Transverse colon (tissue), 4 donors: ENCODE measurements at regions of chr5 and their contacts with region 1.

Region 1: GRCh38 chr5:175579742-175580432 is 78.0 kb upstream of the HRH2 start:
- DNase-seq: no peak
- H3K4me3 ChIP-seq: no peak overlapping the region
- H3K27ac ChIP-seq: no peak overlapping the region
- H3K4me1 ChIP-seq: no peaks in the 10 kb centered on the region
- H3K27me3 ChIP-seq: peaks cover 18% of the 10 kb centered on the region
- CTCF ChIP-seq: no peak
- EP300 ChIP-seq: no peak
- POLR2A ChIP-seq: no peak

Region 2: DNA sequence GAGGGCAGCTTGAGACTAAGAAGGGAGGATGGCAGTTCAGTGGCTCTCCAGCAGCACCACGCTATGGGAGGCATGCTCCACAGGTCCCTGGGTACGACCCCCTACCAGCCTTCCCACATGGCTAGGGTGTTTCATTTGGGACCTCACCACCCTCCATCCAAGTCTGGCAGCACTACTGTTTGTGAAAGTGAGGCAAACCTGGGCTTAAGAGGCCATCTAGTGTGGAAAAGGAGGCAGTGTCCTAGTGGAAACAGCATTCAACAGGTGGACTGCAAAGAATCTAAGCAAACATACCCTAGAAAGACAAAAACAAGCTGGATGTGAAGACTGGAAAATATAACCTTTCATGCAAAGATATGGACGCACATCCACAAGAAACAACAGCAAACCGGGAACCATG is 1595.7 kb before region 1 on chr5:
- in situ Hi-C with region 1: no loop called
- intact Hi-C with region 1: loop called (anchors 5 kb)
- DNase-seq: no peak
- H3K4me3 ChIP-seq: no peak overlapping the region
- H3K27ac ChIP-seq: no peak overlapping the region
- H3K4me1 ChIP-seq: no peaks in the 10 kb centered on the region
- H3K27me3 ChIP-seq: peaks cover 13% of the 10 kb centered on the region
- CTCF ChIP-seq: no peak
- EP300 ChIP-seq: no peak
- POLR2A ChIP-seq: no peak

Region 3: GRCh38 chr5:175410926-175411325 is 169.0 kb before region 1 on chr5:
- in situ Hi-C with region 1: no loop called
- intact Hi-C with region 1: no loop called
- DNase-seq: no peak
- H3K4me3 ChIP-seq: no peak overlapping the region
- H3K27ac ChIP-seq: no peak overlapping the region
- H3K4me1 ChIP-seq: no peaks in the 10 kb centered on the region
- H3K27me3 ChIP-seq: no peaks in the 10 kb centered on the region
- CTCF ChIP-seq: no peak
- EP300 ChIP-seq: no peak
- POLR2A ChIP-seq: no peak

Region 4: DNA sequence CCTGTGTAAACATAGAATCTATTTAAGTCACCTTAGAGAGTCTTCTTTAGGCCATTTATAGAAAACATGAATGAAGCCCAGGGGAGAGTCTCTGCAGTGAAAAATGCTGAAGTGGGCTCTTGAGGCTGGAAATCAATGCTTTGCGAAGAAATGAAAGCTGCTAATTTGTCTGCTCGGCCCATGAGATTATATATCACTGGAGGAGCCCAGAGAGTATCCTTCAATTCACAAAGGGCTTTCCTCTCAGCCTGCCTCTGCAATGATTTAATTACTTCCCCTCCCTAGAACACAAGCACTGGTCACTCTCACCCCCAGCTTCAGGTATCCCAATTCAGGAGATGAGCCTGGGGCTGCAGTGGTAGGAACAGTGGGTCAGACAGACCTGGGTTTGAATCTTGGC is 127.7 kb before region 1 on chr5:
- in situ Hi-C with region 1: no loop called
- intact Hi-C with region 1: no loop called
- DNase-seq: no peak
- H3K4me3 ChIP-seq: no peak overlapping the region
- H3K27ac ChIP-seq: no peak overlapping the region
- H3K4me1 ChIP-seq: no peaks in the 10 kb centered on the region
- H3K27me3 ChIP-seq: peaks cover 18% of the 10 kb centered on the region
- CTCF ChIP-seq: no peak
- EP300 ChIP-seq: no peak
- POLR2A ChIP-seq: no peak